CD4-positive, alpha-beta T cell (primary cell): ENCODE measurements at regions of chr20 and their contacts with region 1.

Region 1: GRCh38 chr20:45823949-45824835 is 2.9 kb downstream of the TNNC2 start:
- DNase-seq: peak; percentile 5 to 78 (median 36)
- ATAC-seq: peak; percentile 75
- H3K4me3 ChIP-seq: peak overlapping the region; percentile 48
- H3K4me3 Mint-ChIP-seq: peak overlapping the region; percentile 85
- H3K27ac ChIP-seq: no peak overlapping the region
- H3K27ac Mint-ChIP-seq: no peak overlapping the region
- H3K4me1 ChIP-seq: peaks cover 17% of the 10 kb centered on the region
- H3K4me1 Mint-ChIP-seq: peaks cover 10% of the 10 kb centered on the region
- H3K27me3 ChIP-seq: peaks cover 11 to 16% of the 10 kb centered on the region in 2 experiments
- H3K27me3 Mint-ChIP-seq: peaks cover 43% of the 10 kb centered on the region
- CTCF ChIP-seq: peak; percentile 31

Region 2: DNA sequence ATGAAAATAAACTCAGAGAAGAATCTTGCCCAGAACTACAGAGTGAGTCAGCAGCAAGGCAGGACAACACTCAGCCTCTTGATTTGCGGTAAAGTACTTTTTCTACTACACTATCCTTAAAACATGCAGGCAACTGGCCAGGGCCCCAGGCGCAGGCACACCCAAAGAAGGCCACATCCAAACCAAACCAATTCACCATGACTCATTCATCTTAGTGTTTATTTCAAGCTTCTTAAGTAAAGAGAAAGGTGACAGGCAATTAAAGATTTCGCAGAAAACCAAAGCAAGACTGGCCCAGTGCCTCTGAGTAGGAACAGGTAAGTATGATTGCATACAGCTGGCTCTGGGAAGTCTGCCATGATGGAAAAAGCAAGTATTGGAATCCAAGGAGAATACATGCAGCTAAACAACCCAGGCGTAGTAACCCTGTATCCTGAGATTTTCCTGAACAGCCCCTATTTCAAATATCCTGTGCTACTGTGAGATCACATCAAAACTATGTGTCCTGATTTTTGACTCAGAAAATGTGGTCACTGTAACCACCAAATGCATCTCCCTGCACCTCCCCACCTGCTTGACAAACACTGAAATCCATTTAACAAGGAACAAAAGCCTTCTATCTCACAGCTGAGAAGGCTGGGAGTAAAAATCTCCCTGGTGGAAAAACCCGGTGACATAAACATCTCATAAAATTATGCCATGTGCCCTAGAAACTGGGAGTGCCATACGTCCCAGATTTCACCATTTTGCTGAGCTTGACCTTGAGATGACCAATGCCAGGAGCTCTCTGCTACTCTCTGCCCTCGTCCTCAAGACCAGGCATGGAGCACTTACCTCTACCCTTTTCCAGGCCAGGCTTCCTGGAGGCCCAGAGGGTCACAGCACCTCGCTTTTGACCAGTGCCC is 44.9 kb before region 1 on chr20:
- CTCF ChIA-PET with region 1: no interaction called
- POLR2A ChIA-PET with region 1: no interaction called
- intact Hi-C with region 1: no loop called
- DNase-seq: no peak
- ATAC-seq: no peak
- H3K4me3 ChIP-seq: no peak overlapping the region
- H3K4me3 Mint-ChIP-seq: no peak overlapping the region
- H3K27ac ChIP-seq: no peak overlapping the region
- H3K27ac Mint-ChIP-seq: no peak overlapping the region
- H3K4me1 ChIP-seq: peaks cover 5% of the 10 kb centered on the region
- H3K4me1 Mint-ChIP-seq: no peaks in the 10 kb centered on the region
- H3K27me3 ChIP-seq: peaks cover 3 to 6% of the 10 kb centered on the region in 2 experiments
- H3K27me3 Mint-ChIP-seq: peaks cover 20% of the 10 kb centered on the region
- CTCF ChIP-seq: no peak

Region 3: DNA sequence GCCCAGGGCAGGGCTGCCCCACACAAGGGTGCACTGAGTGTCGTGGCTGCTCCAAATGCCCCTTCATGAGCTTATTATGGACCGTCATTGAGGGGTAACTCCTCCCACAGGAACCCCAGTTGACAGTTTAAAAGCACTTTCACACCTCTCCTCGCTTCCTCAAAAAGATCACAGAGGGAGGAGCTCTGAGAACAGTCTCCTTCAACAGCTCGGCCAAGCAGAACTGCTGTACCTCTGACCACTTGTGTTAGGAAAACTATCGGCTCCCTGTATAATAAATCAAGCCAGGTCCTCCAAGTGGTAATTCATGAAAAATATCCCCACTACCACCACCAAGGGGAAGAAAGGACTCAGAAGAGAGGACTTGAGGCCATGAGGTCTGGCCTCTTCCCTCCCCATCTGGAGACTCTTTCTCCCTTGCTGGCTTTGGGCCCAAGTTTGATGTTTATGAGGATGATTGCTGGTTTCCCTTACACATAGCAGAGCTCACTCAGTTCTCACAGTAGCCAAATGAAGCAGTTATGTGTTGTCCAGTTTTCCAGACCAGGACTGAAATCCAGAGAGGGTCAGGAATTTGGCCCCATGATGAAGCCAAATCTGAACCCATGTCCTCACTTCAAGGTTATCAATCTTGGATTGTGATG is 18.1 kb after region 1 on chr20:
- CTCF ChIA-PET with region 1: no interaction called
- POLR2A ChIA-PET with region 1: no interaction called
- intact Hi-C with region 1: no loop called
- DNase-seq: peak in 1 of 14 experiments; percentile 6
- ATAC-seq: no peak
- H3K4me3 ChIP-seq: no peak overlapping the region
- H3K4me3 Mint-ChIP-seq: no peak overlapping the region
- H3K27ac ChIP-seq: no peak overlapping the region
- H3K27ac Mint-ChIP-seq: no peak overlapping the region
- H3K4me1 ChIP-seq: no peaks in the 10 kb centered on the region
- H3K4me1 Mint-ChIP-seq: no peaks in the 10 kb centered on the region
- H3K27me3 ChIP-seq: no peaks in the 10 kb centered on the region
- H3K27me3 Mint-ChIP-seq: no peaks in the 10 kb centered on the region
- CTCF ChIP-seq: no peak

Region 4: GRCh38 chr20:45867819-45868176 is 43.6 kb after region 1 on chr20:
- CTCF ChIA-PET with region 1: no interaction called
- POLR2A ChIA-PET with region 1: no interaction called
- intact Hi-C with region 1: no loop called
- DNase-seq: no peak
- ATAC-seq: no peak
- H3K4me3 ChIP-seq: no peak overlapping the region
- H3K4me3 Mint-ChIP-seq: no peak overlapping the region
- H3K27ac ChIP-seq: no peak overlapping the region
- H3K27ac Mint-ChIP-seq: no peak overlapping the region
- H3K4me1 ChIP-seq: no peaks in the 10 kb centered on the region
- H3K4me1 Mint-ChIP-seq: no peaks in the 10 kb centered on the region
- H3K27me3 ChIP-seq: no peaks in the 10 kb centered on the region
- H3K27me3 Mint-ChIP-seq: no peaks in the 10 kb centered on the region
- CTCF ChIP-seq: no peak

Region 5: GRCh38 chr20:45963059-45964005 is 139.1 kb after region 1 on chr20:
- CTCF ChIA-PET with region 1: interaction called, 3 read pairs
- POLR2A ChIA-PET with region 1: no interaction called
- intact Hi-C with region 1: loop called in 1 of 2 experiments (anchors 2 kb)
- DNase-seq: peak in 3 of 14 experiments; percentile 53 to 69 (median 66)
- ATAC-seq: peak; percentile 61
- H3K4me3 ChIP-seq: no peak overlapping the region
- H3K4me3 Mint-ChIP-seq: peak overlapping the region; percentile 30
- H3K27ac ChIP-seq: no peak overlapping the region
- H3K27ac Mint-ChIP-seq: peak overlapping the region; percentile 59
- H3K4me1 ChIP-seq: peaks cover 13% of the 10 kb centered on the region
- H3K4me1 Mint-ChIP-seq: peaks cover 4% of the 10 kb centered on the region
- H3K27me3 ChIP-seq: no peaks in the 10 kb centered on the region
- H3K27me3 Mint-ChIP-seq: no peaks in the 10 kb centered on the region
- CTCF ChIP-seq: no peak